AG04450 (cell line): ENCODE measurements at regions of chr6 and their contacts with region 1.

Region 1: GRCh38 chr6:169441292-169441691 is 187.6 kb upstream of the THBS2 start:
- DNase-seq: no peak
- H3K4me3 ChIP-seq: no peak overlapping the region
- H3K27ac ChIP-seq: no peak overlapping the region
- H3K27me3 ChIP-seq: no peaks in the 10 kb centered on the region
- CTCF ChIP-seq: no peak

Region 2: DNA sequence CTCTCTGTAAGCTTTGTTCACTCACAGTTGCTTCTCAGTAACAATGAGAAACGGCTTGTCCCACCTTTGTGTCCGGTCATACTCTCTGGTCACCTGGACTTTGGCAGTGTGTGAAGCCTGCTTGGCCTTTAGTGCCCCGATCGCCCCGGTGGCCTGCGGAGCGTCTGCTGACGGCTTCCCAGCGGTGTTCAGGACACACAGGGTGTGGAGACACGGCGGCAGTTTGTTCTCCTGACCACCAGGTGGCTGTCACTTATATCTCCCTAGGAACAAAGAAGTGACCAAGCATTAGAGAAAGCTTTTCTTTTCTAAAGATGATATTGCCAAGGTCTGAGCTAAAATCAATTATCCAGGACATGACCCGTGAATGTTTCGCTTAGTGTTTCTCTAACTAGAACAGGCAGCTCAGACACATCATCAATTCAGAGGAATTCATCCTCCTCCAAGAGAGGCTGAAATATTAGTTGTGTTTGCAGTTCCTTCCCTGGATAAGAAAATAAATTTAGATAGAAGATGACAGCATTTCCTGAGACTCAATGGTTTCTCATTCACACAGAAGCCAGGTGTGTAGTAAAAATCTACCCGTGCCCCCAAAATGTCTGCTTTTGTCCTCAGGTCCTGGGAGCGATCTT is 20.3 kb before region 1 on chr6:
- CTCF ChIA-PET with region 1: interaction called, 17 read pairs
- POLR2A ChIA-PET with region 1: no interaction called
- DNase-seq: no peak
- H3K4me3 ChIP-seq: no peak overlapping the region
- H3K27ac ChIP-seq: no peak overlapping the region
- H3K27me3 ChIP-seq: no peaks in the 10 kb centered on the region
- CTCF ChIP-seq: peak; percentile 52

Region 3: DNA sequence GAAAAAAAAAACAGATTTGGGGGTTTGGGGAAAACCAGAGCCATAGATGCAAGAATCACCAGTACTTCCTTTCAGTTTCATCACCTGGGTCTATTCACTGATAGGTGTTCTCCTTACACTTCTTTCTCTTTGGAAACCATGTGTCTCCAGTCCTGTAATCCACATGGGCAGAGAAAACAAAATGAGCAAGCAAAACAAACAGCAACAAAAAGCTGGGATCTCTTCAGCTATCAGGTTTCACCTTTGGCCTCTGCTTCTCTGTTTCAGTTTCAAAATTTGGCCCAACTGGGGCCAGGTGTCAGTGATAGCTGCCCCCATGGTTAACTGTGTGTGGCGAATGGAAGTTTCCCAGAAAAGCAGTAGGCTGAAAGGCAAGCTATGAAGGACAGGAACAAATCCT is 32.4 kb after region 1 on chr6:
- CTCF ChIA-PET with region 1: no interaction called
- POLR2A ChIA-PET with region 1: no interaction called
- DNase-seq: no peak
- H3K4me3 ChIP-seq: no peak overlapping the region
- H3K27ac ChIP-seq: no peak overlapping the region
- H3K27me3 ChIP-seq: no peaks in the 10 kb centered on the region
- CTCF ChIP-seq: no peak

Region 4: GRCh38 chr6:170393807-170394399 is 952.6 kb after region 1 on chr6:
- CTCF ChIA-PET with region 1: no interaction called
- POLR2A ChIA-PET with region 1: no interaction called
- DNase-seq: no peak
- H3K4me3 ChIP-seq: no peak overlapping the region
- H3K27ac ChIP-seq: no peak overlapping the region
- H3K27me3 ChIP-seq: no peaks in the 10 kb centered on the region
- CTCF ChIP-seq: no peak